Calu3 (cell line): ENCODE measurements at regions of chr11 and their contacts with region 1.

Region 1: DNA sequence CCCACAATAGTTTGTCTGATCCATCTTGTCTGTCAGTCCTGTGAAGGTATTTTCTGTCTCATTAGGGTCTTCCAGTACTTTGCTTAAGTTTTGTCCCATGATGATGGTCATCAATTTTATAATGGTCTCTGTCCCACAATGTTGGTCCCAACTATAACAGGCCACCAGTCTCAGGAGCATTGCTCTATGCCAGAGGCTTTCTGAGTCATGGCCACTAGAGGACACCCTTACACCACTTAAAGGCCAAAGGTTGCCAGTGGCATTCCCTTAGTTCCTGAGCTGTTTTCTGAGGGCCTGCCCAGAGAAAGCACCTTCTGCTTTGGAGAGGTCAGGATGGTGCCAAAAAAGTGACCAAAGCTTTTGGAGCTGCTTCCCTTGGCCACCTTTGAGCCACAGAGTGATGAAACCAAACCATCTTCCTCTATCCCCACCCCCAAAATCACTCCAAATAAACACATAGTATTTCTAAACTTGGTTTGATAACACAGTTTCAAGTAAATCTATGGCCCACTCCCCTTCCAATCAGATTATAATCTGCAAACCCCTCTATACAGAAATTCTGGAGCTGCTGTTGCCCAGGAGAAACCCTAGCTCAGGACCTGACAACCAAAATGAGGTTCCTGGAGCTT is 19.3 kb downstream of the EIF3F start:
- DNase-seq: peak; percentile 71
- H3K4me3 Mint-ChIP-seq: no peak overlapping the region
- H3K27ac Mint-ChIP-seq: no peak overlapping the region
- H3K4me1 Mint-ChIP-seq: no peaks in the 10 kb centered on the region
- H3K27me3 Mint-ChIP-seq: peaks cover 10% of the 10 kb centered on the region
- CTCF ChIP-seq: peak; percentile 59

Region 2: GRCh38 chr11:7986768-7987559 is 19.5 kb before region 1 on chr11 and contains the start of gene EIF3F:
- CTCF ChIA-PET with region 1: no interaction called
- intact Hi-C with region 1: no loop called
- DNase-seq: peak; percentile 87
- H3K4me3 Mint-ChIP-seq: peak within 1 kb of the TSS; percentile 99
- H3K27ac Mint-ChIP-seq: peak within 1 kb of the TSS; percentile 100
- H3K4me1 Mint-ChIP-seq: peaks cover 34% of the 10 kb centered on the region
- H3K27me3 Mint-ChIP-seq: no peaks in the 10 kb centered on the region
- CTCF ChIP-seq: peak; percentile 93
- total RNA-seq, gene EIF3F: 178 and 197 TPM in 2 replicates

Region 3: DNA sequence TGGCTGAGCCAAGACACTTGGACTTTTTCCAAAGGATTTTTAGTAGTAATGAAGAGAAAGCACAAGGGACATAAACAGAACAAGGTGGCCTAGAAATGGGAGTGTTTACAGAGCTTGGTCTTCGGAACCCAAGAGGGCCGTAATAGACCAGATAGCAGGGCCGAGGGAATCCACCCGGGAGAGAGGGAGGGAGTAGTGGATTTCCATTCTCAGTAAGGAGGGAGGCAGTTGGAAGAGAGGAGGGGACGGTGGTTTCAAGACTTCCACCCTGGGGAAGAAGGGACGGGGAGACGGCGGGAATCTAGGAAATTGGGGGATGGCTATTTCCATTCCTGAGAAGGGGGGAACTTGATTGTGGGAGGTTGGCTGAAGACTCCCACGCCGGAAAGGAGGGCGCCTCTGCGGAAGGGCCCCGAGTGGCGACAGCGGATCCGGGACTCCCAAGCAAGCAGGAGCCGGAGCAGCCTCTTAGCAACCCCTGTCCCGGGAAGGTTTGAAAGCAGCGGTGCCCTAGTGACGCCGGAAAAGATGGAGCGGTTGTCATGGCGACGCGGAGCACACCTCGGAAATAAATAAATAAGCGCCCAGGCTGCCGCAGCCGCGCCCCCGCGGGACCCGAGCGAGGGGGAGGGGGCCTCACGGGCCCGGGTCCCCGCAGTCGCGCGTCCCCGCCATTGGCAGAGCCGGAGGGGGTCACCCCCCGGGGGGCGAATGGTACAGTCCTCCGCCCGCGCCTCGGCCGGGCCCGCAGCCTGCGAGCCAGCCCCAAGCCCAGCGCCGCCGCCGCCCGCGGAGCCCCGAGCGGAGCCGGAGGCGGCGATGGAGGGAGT is 12.2 kb after region 1 on chr11:
- CTCF ChIA-PET with region 1: interaction called, 14 read pairs
- intact Hi-C with region 1: no loop called
- DNase-seq: peak; percentile 47
- H3K4me3 Mint-ChIP-seq: peak overlapping the region; percentile 45
- H3K27ac Mint-ChIP-seq: no peak overlapping the region
- H3K4me1 Mint-ChIP-seq: peaks cover 8% of the 10 kb centered on the region
- H3K27me3 Mint-ChIP-seq: peaks cover 69% of the 10 kb centered on the region
- CTCF ChIP-seq: no peak

Region 4: DNA sequence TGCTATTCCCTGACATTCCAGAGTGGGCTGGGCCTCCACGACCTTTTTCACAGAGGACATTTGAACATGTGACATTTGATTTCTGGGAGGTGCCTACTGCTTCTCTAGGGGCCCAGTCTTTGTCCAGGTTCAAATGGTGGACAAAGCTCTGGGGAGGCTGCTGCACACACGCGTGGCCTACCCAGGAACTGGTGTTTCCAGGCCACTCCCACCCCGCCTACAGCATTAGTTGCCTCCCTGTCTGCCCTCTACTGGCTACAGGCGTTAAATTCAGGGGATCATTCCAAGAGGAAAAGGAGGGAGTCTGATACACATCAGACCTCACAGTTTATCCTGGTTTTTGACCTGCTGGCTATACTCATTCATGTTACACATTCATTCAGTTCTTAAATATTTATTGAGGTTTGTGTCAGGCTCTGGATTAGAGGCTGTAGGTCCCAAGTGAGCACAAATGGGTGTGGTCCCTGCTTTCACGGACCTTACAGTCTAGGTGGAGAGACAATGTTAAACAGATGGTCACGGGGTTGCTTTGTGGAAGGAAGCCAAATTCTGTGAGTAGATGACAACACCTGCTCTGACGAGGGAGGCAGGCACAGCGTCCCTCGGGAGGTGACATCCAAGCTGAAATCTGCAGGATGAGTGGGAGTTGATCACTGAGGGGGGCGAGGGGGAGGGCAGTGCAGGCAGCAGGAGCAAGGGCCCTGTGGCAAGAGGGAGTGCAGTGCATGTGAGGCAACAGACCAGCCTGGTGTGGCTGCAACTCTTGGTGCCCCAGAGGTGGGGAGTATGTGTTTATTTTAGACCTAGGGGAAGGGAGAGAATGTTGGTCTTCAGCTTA is 86.3 kb after region 1 on chr11:
- CTCF ChIA-PET with region 1: interaction called, 23 read pairs
- intact Hi-C with region 1: no loop called
- DNase-seq: peak; percentile 72
- H3K4me3 Mint-ChIP-seq: no peak overlapping the region
- H3K27ac Mint-ChIP-seq: no peak overlapping the region
- H3K4me1 Mint-ChIP-seq: no peaks in the 10 kb centered on the region
- H3K27me3 Mint-ChIP-seq: peaks cover 12% of the 10 kb centered on the region
- CTCF ChIP-seq: peak; percentile 56

Region 5: DNA sequence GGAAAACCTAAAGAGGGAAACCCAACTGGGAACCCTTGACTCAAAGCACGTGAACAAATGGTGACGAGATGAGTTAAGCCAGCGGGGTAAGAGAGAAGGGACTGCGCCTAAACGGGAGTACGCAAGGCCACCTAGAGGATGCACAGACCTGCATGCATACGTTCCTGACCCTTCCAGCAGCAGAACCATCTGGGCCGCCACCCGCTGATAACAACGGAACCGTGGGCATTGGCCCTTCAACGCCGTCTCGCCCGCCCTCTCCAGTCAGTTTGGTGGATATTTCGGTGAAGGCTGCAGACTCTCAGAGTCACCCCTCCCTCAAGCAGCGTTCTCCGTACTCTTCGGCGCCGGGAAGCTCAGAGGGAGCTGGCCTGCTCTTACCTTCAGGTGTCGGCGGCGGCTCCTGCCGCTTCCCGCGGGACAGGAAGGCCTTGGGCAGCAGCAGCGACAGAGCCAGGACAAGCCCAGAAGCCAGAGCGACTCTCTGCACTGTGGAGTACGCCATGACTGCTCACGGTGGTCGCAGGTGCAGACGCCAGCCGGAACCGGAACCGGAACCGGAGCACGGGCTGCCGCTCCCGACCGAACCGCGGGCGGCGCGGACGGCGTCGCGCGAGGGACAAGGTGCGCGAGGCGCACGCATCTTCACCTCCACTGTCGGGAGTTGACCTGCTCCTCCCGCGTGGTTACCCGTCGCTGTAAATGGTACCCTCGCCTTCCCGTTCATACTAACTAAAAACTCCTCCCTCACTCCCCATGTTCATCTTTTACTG is 162.2 kb after region 1 on chr11 and contains the start of gene RIC3:
- CTCF ChIA-PET with region 1: no interaction called
- intact Hi-C with region 1: no loop called
- DNase-seq: no peak
- H3K4me3 Mint-ChIP-seq: peak within 1 kb of the TSS; percentile 27
- H3K27ac Mint-ChIP-seq: no peak within 1 kb of the TSS
- H3K4me1 Mint-ChIP-seq: no peaks in the 10 kb centered on the region
- H3K27me3 Mint-ChIP-seq: peaks cover 57% of the 10 kb centered on the region
- CTCF ChIP-seq: no peak
- total RNA-seq, gene RIC3: 0.12 and 0.38 TPM in 2 replicates